Sigmoid colon (tissue), 7 donors: ENCODE measurements at regions of chr6 and their contacts with region 1.

Region 1: GRCh38 chr6:160030103-160030502 is 61.2 kb downstream of the IGF2R start:
- DNase-seq: peak; percentile 91
- H3K4me3 ChIP-seq: peak overlapping the region in 2 of 4 donors; percentile 1 to 14
- H3K27ac ChIP-seq: peak overlapping the region; percentile 72 to 82 (median 76)
- H3K4me1 ChIP-seq: peaks cover 0 to 22% (median 18%) of the 10 kb centered on the region in 4 donors
- H3K27me3 ChIP-seq: no peaks in the 10 kb centered on the region
- CTCF ChIP-seq: no peak
- EP300 ChIP-seq: peak in 1 of 4 donors; percentile 58
- POLR2A ChIP-seq: no peak

Region 2: DNA sequence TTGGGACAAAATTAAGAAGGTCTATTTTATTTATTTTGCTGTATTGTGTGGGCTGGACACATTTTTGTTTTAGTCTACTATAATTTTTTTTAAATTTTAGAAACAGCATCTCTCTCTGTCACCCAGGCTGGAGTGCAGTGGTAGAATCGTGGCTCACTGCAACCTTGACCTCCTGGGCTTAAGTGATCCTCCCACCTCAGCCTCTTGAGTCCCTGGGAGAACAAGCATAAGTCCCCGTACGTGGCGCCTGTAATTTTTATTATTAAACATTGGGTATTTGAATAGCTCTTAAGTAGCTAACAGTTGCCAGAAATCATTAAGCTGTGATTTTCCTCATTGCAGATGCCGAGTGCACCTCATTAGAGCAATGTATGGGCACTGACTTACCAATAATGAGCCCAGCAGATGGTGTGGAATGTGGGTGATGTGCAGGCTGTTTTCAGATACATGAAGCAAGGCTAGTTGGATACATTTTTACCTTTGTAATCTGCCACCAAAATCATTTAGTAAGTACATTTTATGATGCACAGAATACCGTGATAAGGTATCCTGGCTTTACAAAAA is 149.6 kb before region 1 on chr6:
- intact Hi-C with region 1: no loop called
- DNase-seq: no peak
- H3K4me3 ChIP-seq: no peak overlapping the region
- H3K27ac ChIP-seq: no peak overlapping the region
- H3K4me1 ChIP-seq: no peaks in the 10 kb centered on the region
- H3K27me3 ChIP-seq: no peaks in the 10 kb centered on the region
- CTCF ChIP-seq: no peak
- EP300 ChIP-seq: no peak
- POLR2A ChIP-seq: no peak

Region 3: DNA sequence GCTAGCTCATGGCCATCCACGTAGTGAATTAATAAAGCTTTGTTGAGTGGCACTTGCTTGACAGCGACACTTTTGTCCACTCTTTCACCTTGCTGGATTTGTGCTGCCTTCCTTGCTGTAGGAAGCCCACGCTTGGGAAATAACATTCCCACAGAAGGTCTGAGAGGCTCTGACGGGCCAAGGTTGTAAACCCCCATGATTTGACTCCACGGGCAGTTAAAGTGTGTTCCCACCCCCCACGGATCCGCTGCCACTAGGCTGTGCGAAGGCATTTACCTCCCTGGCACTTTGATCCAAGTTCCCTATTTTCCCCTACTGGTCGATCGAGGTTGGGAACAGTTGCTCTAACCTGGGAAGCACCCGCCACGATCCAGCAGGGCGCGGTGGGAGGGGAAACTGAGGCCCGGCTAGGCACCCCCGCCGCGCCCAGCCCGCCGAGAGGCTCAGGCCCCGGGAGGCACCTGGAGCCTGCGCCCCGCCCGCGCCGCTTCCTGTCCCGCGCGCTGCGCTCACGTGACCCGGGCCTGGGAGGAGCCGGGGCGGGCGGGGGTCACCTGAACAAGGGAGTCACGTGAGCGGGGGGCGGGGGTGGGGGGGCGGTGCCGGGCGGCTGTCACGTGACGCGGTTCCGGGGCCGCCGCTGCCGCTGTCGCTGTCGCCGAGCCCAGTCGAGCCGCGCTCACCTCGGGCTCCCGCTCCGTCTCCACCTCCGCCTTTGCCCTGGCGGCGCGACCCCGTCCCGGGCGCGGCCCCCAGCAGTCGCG is 61.5 kb before region 1 on chr6 and contains the start of gene IGF2R:
- intact Hi-C with region 1: loop called (anchors 2 kb)
- DNase-seq: peak; percentile 98
- H3K4me3 ChIP-seq: peak within 1 kb of the TSS; percentile 86 to 98 (median 92)
- H3K27ac ChIP-seq: peak within 1 kb of the TSS; percentile 83 to 94 (median 89)
- H3K4me1 ChIP-seq: peaks cover 0 to 37% (median 25%) of the 10 kb centered on the region in 4 donors
- H3K27me3 ChIP-seq: no peaks in the 10 kb centered on the region
- CTCF ChIP-seq: no peak
- EP300 ChIP-seq: peak in 1 of 4 donors; percentile 17
- POLR2A ChIP-seq: peak; percentile 49 to 53
- total RNA-seq, gene IGF2R: 34.6 to 80.9 (median 42.8) TPM

Region 4: DNA sequence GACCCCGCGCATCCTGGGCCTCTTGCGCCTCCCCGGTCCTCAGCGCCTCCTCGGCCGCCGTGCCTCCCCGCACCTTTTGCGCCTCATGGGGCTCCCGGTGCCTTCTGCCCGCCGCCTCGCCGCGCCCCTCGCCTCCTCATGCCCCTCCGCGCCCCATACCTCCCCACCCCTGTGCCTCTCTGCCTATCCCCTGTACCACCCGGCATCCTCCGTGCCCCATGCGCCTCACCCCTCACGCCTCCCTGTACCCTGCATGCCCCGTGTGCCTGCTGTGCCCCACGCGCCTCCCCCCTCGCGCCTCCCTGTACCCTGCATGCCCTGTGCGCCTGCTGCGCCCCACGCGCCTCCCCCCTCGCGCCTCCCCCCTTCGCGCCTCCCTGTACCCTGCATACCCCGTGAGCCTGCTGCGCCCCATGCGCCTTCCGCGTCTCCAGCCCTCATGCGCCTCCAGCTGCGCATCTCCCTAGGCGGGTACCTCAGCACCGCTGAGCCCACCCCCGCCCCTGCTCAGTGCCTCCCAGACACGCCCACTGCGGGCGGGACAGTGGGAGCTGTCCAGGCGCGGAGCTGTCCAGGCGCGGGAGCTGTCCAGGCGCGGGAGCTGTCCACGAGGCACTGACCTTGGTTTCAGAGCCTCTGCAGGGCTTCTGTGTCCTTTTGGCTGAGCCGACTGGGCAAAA is 24.1 kb before region 1 on chr6:
- intact Hi-C with region 1: no loop called
- DNase-seq: no peak
- H3K4me3 ChIP-seq: peak overlapping the region in 1 of 4 donors; percentile 13
- H3K27ac ChIP-seq: no peak overlapping the region
- H3K4me1 ChIP-seq: peaks cover 0 to 13% (median 6%) of the 10 kb centered on the region in 4 donors
- H3K27me3 ChIP-seq: no peaks in the 10 kb centered on the region
- CTCF ChIP-seq: no peak
- EP300 ChIP-seq: no peak
- POLR2A ChIP-seq: no peak